Activated CD8-positive, alpha-beta T cell treated with anti-CD3 and anti-CD28 coated beads, Interleukin-2, amount 10 ng/mL, durations not matched to agents 7 days and 5 days (primary cell): ENCODE measurements at regions of chr7 and their contacts with region 1.

Region 1: GRCh38 chr7:129611246-129612111 is at the start of gene NRF1:
- DNase-seq: peak; percentile 90
- ATAC-seq: peak; percentile 91
- H3K4me3 Mint-ChIP-seq: peak within 1 kb of the TSS; percentile 96
- H3K27ac Mint-ChIP-seq: peak within 1 kb of the TSS; percentile 97
- H3K4me1 Mint-ChIP-seq: peaks cover 55% of the 10 kb centered on the region
- H3K27me3 Mint-ChIP-seq: no peaks in the 10 kb centered on the region
- total RNA-seq, gene NRF1: 28.1 to 30.0 TPM

Region 2: GRCh38 chr7:129635300-129636029 is 24.0 kb after region 1 on chr7:
- CTCF ChIA-PET with region 1: interaction called, 46 read pairs
- POLR2A ChIA-PET with region 1: interaction called, 5 read pairs
- DNase-seq: peak; percentile 80
- ATAC-seq: peak; percentile 86
- H3K4me3 Mint-ChIP-seq: no peak overlapping the region
- H3K27ac Mint-ChIP-seq: no peak overlapping the region
- H3K4me1 Mint-ChIP-seq: peaks cover 32% of the 10 kb centered on the region
- H3K27me3 Mint-ChIP-seq: no peaks in the 10 kb centered on the region

Region 3: DNA sequence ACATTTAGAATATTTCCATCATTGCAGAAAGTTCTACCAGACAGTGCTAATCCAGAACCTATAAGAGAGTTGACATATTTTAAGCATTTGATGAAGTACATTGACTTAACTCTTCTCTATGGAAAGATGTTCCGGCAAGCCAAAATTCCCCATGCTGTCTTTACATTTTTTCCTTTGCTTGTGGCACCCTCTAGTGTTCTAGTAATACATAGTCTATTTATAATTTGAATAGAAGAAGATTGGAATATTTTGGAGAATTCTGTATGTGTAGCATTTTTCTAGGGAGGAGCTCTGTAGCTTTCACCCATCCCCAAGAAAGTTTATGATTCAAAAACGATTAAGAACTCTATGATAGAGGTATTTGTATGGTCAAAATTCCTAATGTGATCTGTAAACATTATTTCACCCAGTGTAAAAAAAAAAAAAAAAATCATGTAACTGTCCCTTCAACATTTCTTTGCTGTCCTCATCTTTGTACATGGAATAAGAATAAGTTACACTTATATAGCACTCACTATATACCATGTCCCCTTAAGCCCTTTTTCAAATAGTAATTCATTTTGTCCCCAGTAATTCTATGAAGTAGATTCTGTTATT is 33.3 kb after region 1 on chr7:
- CTCF ChIA-PET with region 1: interaction called, 17 read pairs
- POLR2A ChIA-PET with region 1: interaction called, 3 read pairs
- DNase-seq: no peak
- ATAC-seq: no peak
- H3K4me3 Mint-ChIP-seq: no peak overlapping the region
- H3K27ac Mint-ChIP-seq: no peak overlapping the region
- H3K4me1 Mint-ChIP-seq: peaks cover 14% of the 10 kb centered on the region
- H3K27me3 Mint-ChIP-seq: no peaks in the 10 kb centered on the region